ENCODE measurements at regions of chr9 and their contacts with region 1.

Region 1: GRCh38 chr9:114155263-114155972 is at the start of gene COL27A1:
- DNase-seq: peak; percentile 67
- ATAC-seq: peak; percentile 84
- H3K4me3 ChIP-seq: peak within 1 kb of the TSS; percentile 72
- H3K27ac ChIP-seq: no peak within 1 kb of the TSS
- H3K4me1 ChIP-seq: peaks cover 10% of the 10 kb centered on the region
- H3K27me3 ChIP-seq: no peaks in the 10 kb centered on the region
- CTCF ChIP-seq: peak; percentile 73
- total RNA-seq, gene COL27A1: 4.3 and 11.4 TPM in 2 replicates

Region 2: DNA sequence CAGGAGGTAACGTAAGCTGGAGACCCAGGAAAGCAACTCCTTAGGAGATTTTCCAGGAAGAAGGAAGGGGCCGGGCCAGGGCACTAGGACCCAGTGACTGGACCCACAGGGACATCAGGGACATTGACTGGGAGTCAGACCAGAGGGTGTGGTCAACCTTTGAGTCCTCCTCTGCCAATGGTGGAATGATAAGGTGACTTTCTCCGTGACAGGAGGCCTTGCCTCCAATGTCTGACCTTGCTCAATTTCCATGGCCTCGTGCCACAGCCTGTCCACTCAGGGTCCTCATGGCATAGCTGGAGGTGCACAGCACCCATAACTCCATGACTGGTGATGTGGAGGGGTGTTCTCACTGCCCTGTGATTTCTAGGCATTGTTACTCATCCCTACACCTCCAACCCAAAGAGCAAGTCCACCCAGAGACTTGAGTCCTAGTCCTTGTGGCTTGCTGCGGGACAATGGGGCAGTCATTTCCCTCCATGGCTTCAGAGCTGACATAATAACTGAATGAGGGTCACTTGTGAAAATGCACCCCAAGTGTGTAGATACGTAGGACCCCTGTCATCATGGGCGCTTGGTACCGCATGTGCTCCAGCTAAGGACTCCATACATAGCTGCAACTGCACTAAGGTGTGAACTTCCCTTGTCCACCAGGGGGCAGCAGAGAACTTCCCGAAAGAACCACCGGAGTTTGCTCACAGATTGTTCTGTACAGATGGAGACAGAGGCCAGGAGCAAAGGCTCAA is 73.2 kb before region 1 on chr9:
- CTCF ChIA-PET with region 1: no interaction called
- POLR2A ChIA-PET with region 1: no interaction called
- intact Hi-C with region 1: loop called (anchors 1 kb)
- DNase-seq: peak; percentile 88
- ATAC-seq: peak; percentile 90
- H3K4me3 ChIP-seq: no peak overlapping the region
- H3K27ac ChIP-seq: no peak overlapping the region
- H3K4me1 ChIP-seq: peaks cover 11% of the 10 kb centered on the region
- H3K27me3 ChIP-seq: no peaks in the 10 kb centered on the region
- CTCF ChIP-seq: peak; percentile 82

Region 3: DNA sequence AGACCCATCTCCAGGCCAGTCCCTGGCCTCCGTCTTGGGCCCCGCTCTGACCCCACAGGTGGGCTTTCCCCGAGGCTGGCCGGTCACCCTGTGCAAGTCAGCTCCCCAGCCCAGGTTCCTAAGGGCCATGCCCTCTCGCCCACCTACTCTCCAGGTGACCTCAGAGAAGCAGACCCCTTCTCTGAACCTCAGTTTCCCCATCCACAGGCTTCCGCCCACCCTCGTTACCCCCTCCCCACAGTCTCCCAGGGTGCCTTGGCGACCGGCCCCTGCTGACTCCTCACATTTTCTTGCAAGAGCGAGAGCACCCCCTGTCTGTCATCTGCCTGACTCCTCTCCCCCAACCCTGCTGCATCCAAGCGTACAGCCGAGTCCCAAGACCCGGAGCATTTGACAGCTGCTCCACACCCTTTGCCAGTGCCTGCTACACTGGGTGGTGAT is 116.2 kb after region 1 on chr9:
- CTCF ChIA-PET with region 1: interaction called, 3 read pairs
- POLR2A ChIA-PET with region 1: no interaction called
- intact Hi-C with region 1: loop called (anchors 5 kb)
- DNase-seq: peak; percentile 15
- ATAC-seq: no peak
- H3K4me3 ChIP-seq: no peak overlapping the region
- H3K27ac ChIP-seq: no peak overlapping the region
- H3K4me1 ChIP-seq: peaks cover 9% of the 10 kb centered on the region
- H3K27me3 ChIP-seq: no peaks in the 10 kb centered on the region
- CTCF ChIP-seq: peak; percentile 48

Region 4: GRCh38 chr9:114291064-114291474 is 135.7 kb after region 1 on chr9:
- CTCF ChIA-PET with region 1: interaction called, 14 read pairs
- POLR2A ChIA-PET with region 1: no interaction called
- intact Hi-C with region 1: loop called (anchors 1 kb)
- DNase-seq: peak; percentile 75
- ATAC-seq: peak; percentile 64
- H3K4me3 ChIP-seq: no peak overlapping the region
- H3K27ac ChIP-seq: no peak overlapping the region
- H3K4me1 ChIP-seq: no peaks in the 10 kb centered on the region
- H3K27me3 ChIP-seq: no peaks in the 10 kb centered on the region
- CTCF ChIP-seq: peak; percentile 85

Region 5: GRCh38 chr9:114505187-114506081 is 350.0 kb after region 1 on chr9 and contains the start of gene WHRN:
- CTCF ChIA-PET with region 1: no interaction called
- POLR2A ChIA-PET with region 1: no interaction called
- intact Hi-C with region 1: no loop called
- DNase-seq: peak; percentile 86
- ATAC-seq: peak; percentile 55
- H3K4me3 ChIP-seq: peak within 1 kb of the TSS; percentile 90
- H3K27ac ChIP-seq: peak within 1 kb of the TSS; percentile 36
- H3K4me1 ChIP-seq: peaks cover 22% of the 10 kb centered on the region
- H3K27me3 ChIP-seq: no peaks in the 10 kb centered on the region
- CTCF ChIP-seq: no peak
- total RNA-seq, gene WHRN: 10.5 and 15.3 TPM in 2 replicates